HEK293T (cell line): ENCODE measurements at regions of chr4 and their contacts with region 1.

Region 1: DNA sequence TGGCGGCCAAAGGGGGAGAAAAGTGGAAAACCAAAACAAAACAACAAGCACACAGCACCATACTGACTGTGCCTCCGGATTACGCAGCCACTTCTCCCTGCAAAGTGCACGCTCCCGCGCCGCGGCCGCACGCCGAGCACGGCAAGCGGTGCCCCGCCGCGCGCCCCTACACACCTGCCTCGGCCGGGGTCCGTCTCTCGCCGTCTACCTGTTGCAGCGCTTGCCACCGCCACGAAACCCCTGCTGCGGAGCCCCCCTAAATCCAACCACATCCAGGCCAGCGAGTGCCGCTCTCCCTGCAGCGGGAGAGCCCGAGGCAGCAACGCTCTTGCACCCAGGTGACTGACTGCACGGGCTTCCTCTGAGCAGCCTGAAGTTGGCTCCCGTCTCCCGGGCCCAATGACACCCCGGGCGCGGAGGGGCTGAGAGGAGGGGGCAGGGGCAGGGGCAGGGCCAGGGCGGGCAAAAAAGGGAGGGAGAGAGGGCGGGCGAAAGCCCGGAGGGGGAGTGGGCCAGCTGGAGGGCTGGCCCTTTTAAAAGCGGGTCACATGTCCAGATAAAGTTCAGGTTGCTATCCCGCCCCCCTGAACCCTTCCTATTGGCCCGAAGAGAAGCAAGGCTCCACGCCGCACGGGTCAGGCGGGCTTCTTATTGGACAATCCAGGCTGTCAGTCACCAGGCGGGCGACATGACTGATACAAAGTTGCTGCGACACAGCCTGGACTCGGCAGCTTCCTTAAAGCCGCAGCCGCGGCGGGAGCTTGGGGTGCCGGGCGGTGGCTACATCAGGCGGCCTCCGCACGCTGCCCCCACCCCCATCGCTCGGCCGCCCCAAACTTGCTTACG is at the start of gene NR3C2:
- DNase-seq: peak; percentile 94

Region 2: DNA sequence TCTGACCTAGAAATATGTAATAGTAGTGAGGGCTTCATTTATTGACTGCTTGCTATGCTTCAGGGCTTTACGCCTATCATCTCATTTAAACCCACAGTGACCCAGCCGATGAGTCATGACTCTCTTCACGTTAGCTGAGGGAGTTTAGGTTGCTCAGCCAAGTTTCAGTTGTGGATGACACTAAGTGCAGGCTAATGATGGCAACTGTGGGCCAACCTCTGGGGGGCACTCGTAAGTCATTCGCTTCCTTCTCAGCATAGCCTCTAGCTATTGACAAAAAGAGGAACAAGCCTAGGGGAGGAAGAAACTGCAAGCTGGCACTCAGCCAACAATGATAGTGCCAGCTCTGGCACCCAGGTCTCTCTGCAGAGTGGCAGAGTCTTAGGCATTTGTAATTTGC is 385.3 kb before region 1 on chr4:
- CTCF ChIA-PET with region 1: no interaction called
- POLR2A ChIA-PET with region 1: interaction called, 10 read pairs
- DNase-seq: peak; percentile 33

Region 3: GRCh38 chr4:148405161-148405893 is 36.9 kb before region 1 on chr4:
- CTCF ChIA-PET with region 1: no interaction called
- POLR2A ChIA-PET with region 1: no interaction called
- DNase-seq: no peak

Region 4: GRCh38 chr4:148454835-148455234 is 12.6 kb after region 1 on chr4:
- CTCF ChIA-PET with region 1: no interaction called
- POLR2A ChIA-PET with region 1: no interaction called
- DNase-seq: no peak